Activated T-helper 1 cell treated with anti-CD3 and anti-CD28 coated beads, Interleukin-12 subunit alpha, Interleukin-12 subunit beta, Interleukin-2, Interleukin-4 antibody, amounts not matched to agents 30 ng/mL and 10 ng/mL and 1 ng/mL, durations not matched to agents 14 hours and 24 hours and 36 hours (primary cell): ENCODE measurements at regions of chr4 and their contacts with region 1.

Region 1: DNA sequence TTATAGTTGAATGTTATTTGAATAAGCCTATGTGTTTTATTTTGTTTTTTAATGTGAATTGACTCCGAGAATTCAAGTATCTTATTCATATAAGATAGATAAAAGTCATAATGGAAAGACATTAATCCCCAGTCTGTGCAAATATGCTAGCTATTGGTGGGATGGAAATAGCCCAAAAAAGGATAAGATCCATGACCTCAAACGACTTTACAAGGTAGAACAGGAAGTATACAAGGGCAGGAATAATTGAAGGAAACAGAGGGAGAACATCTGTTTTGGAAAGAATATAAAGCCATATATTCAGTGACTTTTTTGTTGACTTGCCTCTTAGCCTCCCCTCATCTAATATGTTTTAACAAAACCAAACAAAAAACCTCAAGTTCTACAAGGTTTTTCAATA is 9.0 kb downstream of the ABCE1 start:
- DNase-seq: no peak
- H3K4me3 Mint-ChIP-seq: no peak overlapping the region
- H3K27ac Mint-ChIP-seq: peak overlapping the region; percentile 32
- H3K4me1 Mint-ChIP-seq: peaks cover 11% of the 10 kb centered on the region
- H3K27me3 Mint-ChIP-seq: no peaks in the 10 kb centered on the region

Region 2: DNA sequence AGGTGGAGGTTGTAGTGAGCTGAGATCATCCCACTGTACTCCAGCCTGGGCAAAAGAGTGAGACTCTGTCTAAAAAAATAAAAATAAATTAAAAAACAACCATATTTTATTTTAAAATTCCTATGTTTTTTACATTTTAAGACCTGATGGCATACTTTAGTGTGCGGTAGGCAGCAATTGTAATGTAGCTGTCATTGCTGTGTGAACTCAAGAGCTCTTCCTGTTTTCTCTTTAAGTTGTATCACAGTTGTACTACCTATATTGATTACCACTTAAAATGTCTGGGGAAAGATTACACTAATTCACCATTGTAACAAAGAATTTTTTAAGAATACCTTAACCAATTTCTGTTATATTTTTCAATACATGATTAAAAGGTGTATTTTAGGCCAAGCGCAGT is 18.3 kb after region 1 on chr4:
- intact Hi-C with region 1: loop called (anchors 2 kb)
- DNase-seq: no peak
- H3K4me3 Mint-ChIP-seq: peak overlapping the region; percentile 49
- H3K27ac Mint-ChIP-seq: peak overlapping the region; percentile 91
- H3K4me1 Mint-ChIP-seq: peaks cover 45% of the 10 kb centered on the region
- H3K27me3 Mint-ChIP-seq: no peaks in the 10 kb centered on the region